ENCODE measurements at regions of chr7 and their contacts with region 1.

Region 1: DNA sequence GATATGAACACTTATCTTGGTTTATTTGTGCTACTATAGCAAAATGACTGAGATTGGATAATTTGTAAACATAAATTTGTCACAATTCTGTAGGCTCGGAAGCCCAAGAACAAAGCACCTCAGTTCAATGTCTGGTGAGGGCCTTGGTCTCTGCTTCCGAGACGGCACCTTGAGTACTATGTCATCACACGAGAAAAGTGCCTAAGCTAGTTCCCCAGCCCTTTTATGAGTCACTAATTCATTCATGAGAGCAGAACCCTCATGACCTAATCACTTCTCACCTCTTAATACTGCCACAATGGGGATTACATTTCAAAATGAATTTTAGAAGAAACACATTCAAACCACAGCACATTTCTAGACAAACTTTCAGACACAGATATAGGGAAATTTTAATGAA is 52.0 kb upstream of the PRSS1 start:
- DNase-seq: no peak
- ATAC-seq: no peak
- H3K4me3 ChIP-seq: no peak overlapping the region
- H3K27ac ChIP-seq: no peak overlapping the region
- H3K4me1 ChIP-seq: no peaks in the 10 kb centered on the region
- H3K27me3 ChIP-seq: peaks cover 10% of the 10 kb centered on the region; the same call in 1 of the 2 replicates
- CTCF ChIP-seq: no peak

Region 2: GRCh38 chr7:142454862-142455261 is 242.4 kb before region 1 on chr7:
- CTCF ChIA-PET with region 1: no interaction called
- POLR2A ChIA-PET with region 1: no interaction called
- intact Hi-C with region 1: no loop called
- DNase-seq: no peak
- ATAC-seq: no peak
- H3K4me3 ChIP-seq: no peak overlapping the region
- H3K27ac ChIP-seq: no peak overlapping the region
- H3K4me1 ChIP-seq: 0 out of 2 replicates have a peak, but pooled peaks cover 2% of the 10 kb centered on the region
- H3K27me3 ChIP-seq: no peaks in the 10 kb centered on the region
- CTCF ChIP-seq: no peak

Region 3: GRCh38 chr7:142654398-142654797 is 42.9 kb before region 1 on chr7:
- CTCF ChIA-PET with region 1: no interaction called
- POLR2A ChIA-PET with region 1: no interaction called
- intact Hi-C with region 1: loop called (anchors 5 kb)
- DNase-seq: peak; percentile 47
- ATAC-seq: no peak
- H3K4me3 ChIP-seq: no peak overlapping the region
- H3K27ac ChIP-seq: no peak overlapping the region
- H3K4me1 ChIP-seq: no peaks in the 10 kb centered on the region
- H3K27me3 ChIP-seq: peaks cover 63% of the 10 kb centered on the region
- CTCF ChIP-seq: peak; percentile 56

Measured in PC-3 (cell line).